Activated naive CD4-positive, alpha-beta T cell treated with anti-CD3 and anti-CD28 coated beads for 36 hours (primary cell): ENCODE measurements at regions of chr4 and their contacts with region 1.

Region 1: DNA sequence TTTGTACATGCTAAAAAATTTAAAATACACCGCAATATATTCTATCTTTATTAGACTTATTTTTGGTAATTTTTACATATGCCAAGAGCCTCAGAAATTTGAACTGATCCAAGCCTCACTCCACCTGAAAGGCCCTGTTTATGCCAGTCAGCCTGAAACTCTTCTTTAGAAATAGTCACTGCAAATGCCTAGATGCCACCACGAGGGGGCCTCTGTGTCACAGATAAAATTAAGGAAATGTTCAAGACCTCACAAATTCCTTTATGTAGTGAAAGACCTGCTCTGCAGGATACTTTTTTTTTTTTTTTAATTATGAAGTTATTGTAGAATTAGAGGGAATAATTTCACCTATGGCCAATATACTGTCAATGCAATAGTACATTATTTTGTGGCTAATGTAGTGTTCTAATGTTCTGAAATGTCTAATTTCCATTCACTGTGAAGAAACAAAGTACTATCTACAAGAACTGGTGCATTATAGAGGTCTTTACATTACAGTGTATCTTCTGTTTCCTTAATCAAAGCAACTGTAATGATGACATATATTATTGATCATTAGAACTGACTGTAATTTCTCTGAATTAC is 69.8 kb downstream of the DTHD1 start:
- DNase-seq: peak; percentile 89
- H3K4me3 Mint-ChIP-seq: no peak overlapping the region
- H3K27ac Mint-ChIP-seq: no peak overlapping the region
- H3K4me1 Mint-ChIP-seq: peaks cover 15% of the 10 kb centered on the region
- H3K27me3 Mint-ChIP-seq: peaks cover 4% of the 10 kb centered on the region

Region 2: DNA sequence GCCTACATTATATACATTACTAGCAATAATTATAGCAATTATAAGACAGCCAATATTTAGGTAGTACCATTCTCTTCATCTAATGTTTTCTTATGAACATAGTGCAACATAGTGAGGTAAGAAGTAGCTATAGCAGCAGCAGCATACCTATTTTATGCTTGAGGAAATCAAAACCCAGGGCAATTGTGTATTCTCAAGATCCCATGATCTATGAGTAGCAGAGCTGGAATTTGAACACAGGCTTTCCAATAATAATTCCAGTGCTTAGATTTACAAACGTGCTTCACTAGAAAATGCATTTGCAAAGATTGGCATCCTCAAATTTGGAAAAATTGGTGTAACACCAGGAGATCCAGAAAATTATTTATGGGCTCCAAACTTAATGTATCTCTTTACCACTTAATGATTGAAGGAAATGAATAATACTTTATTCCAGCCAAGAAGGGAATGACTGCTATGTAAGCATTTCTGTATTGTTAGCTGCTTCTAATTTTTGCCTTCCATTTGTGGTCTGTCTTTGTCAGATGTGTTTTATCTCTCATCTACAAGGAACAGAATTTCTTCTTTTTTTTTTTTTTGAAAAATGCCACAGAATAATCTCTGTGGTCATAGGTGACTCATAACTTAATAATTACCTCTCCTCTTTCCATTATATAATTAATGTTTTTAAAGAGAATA is 558.0 kb before region 1 on chr4:
- CTCF ChIA-PET with region 1: no interaction called
- intact Hi-C with region 1: no loop called
- DNase-seq: no peak
- H3K4me3 Mint-ChIP-seq: no peak overlapping the region
- H3K27ac Mint-ChIP-seq: no peak overlapping the region
- H3K4me1 Mint-ChIP-seq: no peaks in the 10 kb centered on the region
- H3K27me3 Mint-ChIP-seq: no peaks in the 10 kb centered on the region

Region 3: DNA sequence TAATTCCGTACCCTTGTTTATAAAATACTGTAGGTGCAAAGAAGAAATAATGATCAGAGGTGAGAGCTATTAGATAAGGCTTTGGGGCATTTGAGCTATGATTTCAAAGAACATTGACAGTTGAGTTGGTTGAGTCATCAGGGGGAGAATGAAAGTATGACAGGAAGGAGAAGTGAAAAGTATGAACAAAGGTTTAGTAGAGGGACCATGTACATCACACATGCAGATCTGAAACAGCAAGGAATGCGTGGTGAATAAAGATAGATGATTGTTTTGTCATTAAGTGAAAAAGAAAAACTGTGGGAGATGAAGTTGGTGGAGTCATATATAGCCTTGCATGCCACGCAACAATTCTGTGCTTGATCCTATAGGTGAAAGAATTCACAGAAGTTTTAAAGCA is 270.0 kb before region 1 on chr4:
- CTCF ChIA-PET with region 1: no interaction called
- intact Hi-C with region 1: loop called (anchors 1 kb)
- DNase-seq: peak; percentile 48
- H3K4me3 Mint-ChIP-seq: no peak overlapping the region
- H3K27ac Mint-ChIP-seq: no peak overlapping the region
- H3K4me1 Mint-ChIP-seq: peaks cover 2% of the 10 kb centered on the region
- H3K27me3 Mint-ChIP-seq: no peaks in the 10 kb centered on the region

Region 4: DNA sequence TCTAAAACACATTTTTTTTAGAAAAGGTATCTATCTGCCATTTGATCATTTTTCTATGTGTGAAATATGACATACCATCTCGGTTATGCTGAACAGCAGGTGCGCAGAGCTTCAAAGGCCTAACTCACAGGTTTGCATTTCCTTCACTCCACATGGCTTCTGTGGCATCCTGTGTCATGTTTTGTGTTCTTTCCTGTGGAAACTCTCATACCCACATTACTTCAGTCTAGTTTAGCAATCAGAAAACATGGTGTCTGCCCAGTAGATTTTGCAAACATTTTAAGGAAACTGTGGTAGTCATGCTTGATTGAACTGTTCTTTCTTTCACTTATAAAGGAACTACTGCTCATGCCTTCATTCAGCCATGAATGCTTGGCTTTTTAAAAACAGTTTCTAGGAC is 95.6 kb before region 1 on chr4:
- CTCF ChIA-PET with region 1: interaction called, 6 read pairs
- intact Hi-C with region 1: loop called (anchors 1 kb)
- DNase-seq: peak; percentile 81
- H3K4me3 Mint-ChIP-seq: peak overlapping the region; percentile 41
- H3K27ac Mint-ChIP-seq: peak overlapping the region; percentile 90
- H3K4me1 Mint-ChIP-seq: peaks cover 30% of the 10 kb centered on the region
- H3K27me3 Mint-ChIP-seq: no peaks in the 10 kb centered on the region

Region 5: DNA sequence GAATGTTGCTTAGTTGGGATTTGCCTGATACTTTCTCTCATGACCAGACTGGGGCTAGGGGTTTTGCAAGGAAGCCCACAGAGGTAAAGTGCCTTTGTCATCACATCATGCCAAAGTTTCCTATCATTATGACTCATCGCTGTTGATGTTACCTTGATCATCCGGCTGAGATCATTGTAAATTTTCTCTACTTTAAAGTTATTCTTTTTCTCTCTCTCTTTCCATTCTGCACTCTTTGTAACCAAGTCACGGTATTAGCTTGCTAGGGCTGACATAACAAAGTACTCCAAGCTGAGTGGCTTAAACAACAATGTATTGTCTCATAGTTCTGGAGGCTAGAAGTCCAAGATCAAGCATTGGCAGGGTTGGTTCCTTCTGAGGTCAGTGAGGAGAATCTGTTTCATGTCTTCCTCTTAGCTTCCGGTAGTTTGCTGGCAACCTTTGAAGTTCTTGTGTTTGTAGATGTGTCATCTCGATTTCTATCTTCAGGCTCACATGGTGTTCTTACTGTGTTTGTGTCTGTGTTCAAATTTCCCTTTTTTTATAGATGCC is 43.3 kb after region 1 on chr4:
- CTCF ChIA-PET with region 1: interaction called, 92 read pairs
- intact Hi-C with region 1: loop called (anchors 1 kb)
- DNase-seq: peak; percentile 63
- H3K4me3 Mint-ChIP-seq: peak overlapping the region; percentile 55
- H3K27ac Mint-ChIP-seq: peak overlapping the region; percentile 97
- H3K4me1 Mint-ChIP-seq: peaks cover 21% of the 10 kb centered on the region
- H3K27me3 Mint-ChIP-seq: no peaks in the 10 kb centered on the region

Region 6: DNA sequence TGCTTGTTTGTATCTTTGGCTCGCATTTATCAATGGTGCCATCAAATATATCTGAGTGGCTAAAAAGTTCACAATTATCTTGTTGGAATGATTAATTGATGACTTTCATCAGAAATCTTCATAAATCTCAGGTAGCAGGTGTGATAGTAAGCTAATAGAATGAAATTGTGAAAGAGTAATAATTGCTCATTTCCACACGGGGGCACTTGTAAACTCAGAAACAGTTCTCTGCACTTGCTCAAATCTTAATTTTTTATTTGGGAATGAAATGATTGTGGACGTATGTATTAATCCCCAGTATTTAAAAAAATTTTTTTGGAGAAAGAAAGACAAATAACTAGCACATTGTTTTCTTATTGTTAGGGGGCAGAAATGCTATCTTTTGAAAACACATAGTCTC is 63.1 kb after region 1 on chr4:
- CTCF ChIA-PET with region 1: no interaction called
- intact Hi-C with region 1: no loop called
- DNase-seq: no peak
- H3K4me3 Mint-ChIP-seq: no peak overlapping the region
- H3K27ac Mint-ChIP-seq: no peak overlapping the region
- H3K4me1 Mint-ChIP-seq: no peaks in the 10 kb centered on the region
- H3K27me3 Mint-ChIP-seq: peaks cover 22% of the 10 kb centered on the region

Region 7: GRCh38 chr4:36551697-36552214 is 200.6 kb after region 1 on chr4:
- CTCF ChIA-PET with region 1: no interaction called
- intact Hi-C with region 1: loop called (anchors 5 kb)
- DNase-seq: peak; percentile 64
- H3K4me3 Mint-ChIP-seq: no peak overlapping the region
- H3K27ac Mint-ChIP-seq: peak overlapping the region; percentile 79
- H3K4me1 Mint-ChIP-seq: peaks cover 10% of the 10 kb centered on the region
- H3K27me3 Mint-ChIP-seq: peaks cover 2% of the 10 kb centered on the region